H1 (cell line): ENCODE measurements at regions of chr10 and their contacts with region 1.

Region 1: GRCh38 chr10:58152673-58153263 is 114.9 kb downstream of the IPMK start:
- DNase-seq: peak; percentile 43 to 77
- H3K4me3 ChIP-seq: no peak overlapping the region
- H3K27ac ChIP-seq: no peak overlapping the region
- H3K4me1 ChIP-seq: peaks cover 0 to 6% (median 1%) of the 10 kb centered on the region in 4 experiments; a peak in 2 of 7 replicates
- H3K27me3 ChIP-seq: no peaks in the 10 kb centered on the region
- CTCF ChIP-seq: peak in 2 of 3 experiments; percentile 54 to 66; a peak in 3 of 4 replicates
- EP300 ChIP-seq: no peak
- POLR2A ChIP-seq: no peak
- RAD21 ChIP-seq: peak; percentile 84 to 89

Region 2: DNA sequence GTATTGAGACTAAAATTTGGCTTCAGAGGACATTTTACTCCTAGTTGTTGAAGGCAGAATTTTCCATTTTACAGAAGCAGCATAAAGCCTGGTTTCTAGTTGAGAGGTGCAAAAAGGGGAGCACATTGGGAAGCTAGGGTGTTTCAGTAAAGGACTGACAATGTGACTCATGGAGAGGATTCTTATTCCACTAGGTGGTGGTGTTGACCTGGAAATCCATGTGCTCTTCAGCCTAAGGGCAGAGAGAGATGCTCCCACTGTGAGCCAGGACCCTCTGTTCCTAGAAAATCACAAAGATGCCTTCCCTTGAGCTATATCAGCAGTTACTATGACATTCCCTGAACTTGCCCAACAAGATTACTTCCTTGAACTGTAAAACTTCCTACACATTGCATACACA is 572.8 kb before region 1 on chr10:
- CTCF ChIA-PET with region 1: interaction called, 16 read pairs
- POLR2A ChIA-PET with region 1: no interaction called
- DNase-seq: peak in 1 of 2 experiments; percentile 21
- H3K4me3 ChIP-seq: no peak overlapping the region
- H3K27ac ChIP-seq: no peak overlapping the region
- H3K4me1 ChIP-seq: no peaks in the 10 kb centered on the region
- H3K27me3 ChIP-seq: no peaks in the 10 kb centered on the region
- CTCF ChIP-seq: peak; percentile 3 to 75 (median 74)
- EP300 ChIP-seq: no peak
- POLR2A ChIP-seq: no peak
- RAD21 ChIP-seq: peak; percentile 94

Region 3: GRCh38 chr10:58064714-58065528 is 87.8 kb before region 1 on chr10:
- CTCF ChIA-PET with region 1: interaction called, 26 read pairs
- POLR2A ChIA-PET with region 1: no interaction called
- DNase-seq: peak in 1 of 2 experiments; percentile 52
- H3K4me3 ChIP-seq: no peak overlapping the region
- H3K27ac ChIP-seq: no peak overlapping the region
- H3K4me1 ChIP-seq: peaks cover 0 to 9% (median 7%) of the 10 kb centered on the region in 4 experiments; a peak in 6 of 7 replicates
- H3K27me3 ChIP-seq: no peaks in the 10 kb centered on the region
- CTCF ChIP-seq: peak in 2 of 3 experiments; percentile 73 to 77; a peak in 3 of 4 replicates
- EP300 ChIP-seq: no peak
- POLR2A ChIP-seq: no peak
- RAD21 ChIP-seq: peak; percentile 98 to 99

Region 4: GRCh38 chr10:58070956-58071355 is 81.8 kb before region 1 on chr10:
- CTCF ChIA-PET with region 1: interaction called, 26 read pairs
- POLR2A ChIA-PET with region 1: no interaction called
- DNase-seq: no peak
- H3K4me3 ChIP-seq: no peak overlapping the region
- H3K27ac ChIP-seq: no peak overlapping the region
- H3K4me1 ChIP-seq: peaks cover 0 to 3% (median 0%) of the 10 kb centered on the region in 4 experiments; a peak in 1 of 7 replicates
- H3K27me3 ChIP-seq: no peaks in the 10 kb centered on the region
- CTCF ChIP-seq: no peak
- EP300 ChIP-seq: no peak
- POLR2A ChIP-seq: no peak
- RAD21 ChIP-seq: no peak

Region 5: GRCh38 chr10:58177362-58177947 is 24.7 kb after region 1 on chr10:
- CTCF ChIA-PET with region 1: interaction called, 14 read pairs
- POLR2A ChIA-PET with region 1: no interaction called
- DNase-seq: no peak
- H3K4me3 ChIP-seq: no peak overlapping the region
- H3K27ac ChIP-seq: no peak overlapping the region
- H3K4me1 ChIP-seq: no peaks in the 10 kb centered on the region
- H3K27me3 ChIP-seq: no peaks in the 10 kb centered on the region
- CTCF ChIP-seq: peak in 2 of 3 experiments; percentile 16 to 38; a peak in 2 of 4 replicates
- EP300 ChIP-seq: no peak
- POLR2A ChIP-seq: no peak
- RAD21 ChIP-seq: peak; percentile 55 to 69